ENCODE measurements at regions of chr9 and their contacts with region 1.

Region 1: DNA sequence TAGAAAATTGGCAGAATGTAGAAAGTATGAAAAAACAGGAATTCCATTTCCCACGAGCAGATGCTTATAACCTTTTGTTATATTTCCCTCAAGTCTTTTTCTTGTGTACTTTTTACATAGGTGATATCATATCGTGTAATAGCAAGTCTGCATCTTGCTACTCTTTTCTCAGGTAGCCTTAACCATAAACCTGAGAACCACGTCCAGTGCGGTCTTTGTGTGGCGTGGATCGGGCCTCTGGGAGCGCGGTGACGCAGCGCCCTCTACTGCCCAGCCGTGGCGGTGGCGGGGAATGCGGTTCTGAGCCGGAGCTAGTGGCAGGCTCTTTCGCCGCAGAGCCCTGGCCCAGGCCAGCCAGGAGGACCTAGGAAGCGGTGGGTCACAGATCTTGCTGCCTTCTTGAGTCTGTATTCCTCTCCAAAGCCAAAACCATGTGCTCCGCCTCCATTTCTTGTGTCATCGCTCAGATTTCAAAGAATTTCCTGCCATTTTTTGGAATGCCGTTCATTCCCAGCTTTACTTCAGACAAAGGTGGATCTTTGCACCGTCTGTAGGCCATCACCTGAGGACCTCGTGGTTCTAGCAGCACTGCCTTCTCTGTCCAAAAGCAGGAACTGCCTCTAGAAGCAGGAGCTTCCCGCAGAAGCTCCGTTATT is 71.9 kb downstream of the MVB12B start:
- DNase-seq: peak; percentile 65
- H3K4me3 Mint-ChIP-seq: no peak overlapping the region
- H3K27ac Mint-ChIP-seq: no peak overlapping the region
- H3K4me1 Mint-ChIP-seq: peaks cover 45% of the 10 kb centered on the region
- H3K27me3 Mint-ChIP-seq: peaks cover 36% of the 10 kb centered on the region

Region 2: DNA sequence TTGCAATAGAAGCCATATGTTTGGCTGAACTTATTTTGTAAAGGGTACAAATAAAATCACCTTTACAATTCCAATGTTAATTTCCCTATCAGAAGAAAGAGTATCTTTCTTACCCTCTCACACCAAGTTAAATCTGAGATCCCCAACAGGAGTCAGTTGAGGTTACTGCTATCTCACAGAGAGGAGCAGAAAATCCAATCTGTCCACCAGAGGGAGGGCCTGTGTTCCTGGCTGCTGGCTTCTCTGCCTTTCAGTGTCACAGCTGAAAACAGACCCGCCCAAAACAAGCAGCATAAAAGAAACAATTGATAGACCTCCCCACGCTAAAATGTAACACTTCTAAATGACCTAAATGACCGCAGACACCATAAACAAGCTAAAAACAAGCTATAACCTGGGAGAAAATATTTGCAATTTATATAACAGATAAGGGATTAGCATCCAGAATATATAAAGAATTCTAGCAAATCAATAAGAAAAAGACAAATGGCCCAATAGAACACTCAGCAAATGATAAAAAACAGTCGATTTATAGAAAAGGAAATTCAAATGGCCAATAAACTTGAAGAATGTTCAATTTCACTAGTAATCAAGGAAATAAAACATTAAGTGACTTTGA is 96.4 kb before region 1 on chr9:
- intact Hi-C with region 1: loop called (anchors 1 kb)
- DNase-seq: peak; percentile 26
- H3K4me3 Mint-ChIP-seq: no peak overlapping the region
- H3K27ac Mint-ChIP-seq: no peak overlapping the region
- H3K4me1 Mint-ChIP-seq: peaks cover 2% of the 10 kb centered on the region
- H3K27me3 Mint-ChIP-seq: peaks cover 14% of the 10 kb centered on the region

Region 3: GRCh38 chr9:126411225-126411947 is 12.9 kb after region 1 on chr9:
- intact Hi-C with region 1: loop called (anchors 1 kb)
- DNase-seq: peak; percentile 46
- H3K4me3 Mint-ChIP-seq: peak overlapping the region; percentile 35
- H3K27ac Mint-ChIP-seq: peak overlapping the region; percentile 58
- H3K4me1 Mint-ChIP-seq: peaks cover 32% of the 10 kb centered on the region
- H3K27me3 Mint-ChIP-seq: peaks cover 13% of the 10 kb centered on the region

Region 4: DNA sequence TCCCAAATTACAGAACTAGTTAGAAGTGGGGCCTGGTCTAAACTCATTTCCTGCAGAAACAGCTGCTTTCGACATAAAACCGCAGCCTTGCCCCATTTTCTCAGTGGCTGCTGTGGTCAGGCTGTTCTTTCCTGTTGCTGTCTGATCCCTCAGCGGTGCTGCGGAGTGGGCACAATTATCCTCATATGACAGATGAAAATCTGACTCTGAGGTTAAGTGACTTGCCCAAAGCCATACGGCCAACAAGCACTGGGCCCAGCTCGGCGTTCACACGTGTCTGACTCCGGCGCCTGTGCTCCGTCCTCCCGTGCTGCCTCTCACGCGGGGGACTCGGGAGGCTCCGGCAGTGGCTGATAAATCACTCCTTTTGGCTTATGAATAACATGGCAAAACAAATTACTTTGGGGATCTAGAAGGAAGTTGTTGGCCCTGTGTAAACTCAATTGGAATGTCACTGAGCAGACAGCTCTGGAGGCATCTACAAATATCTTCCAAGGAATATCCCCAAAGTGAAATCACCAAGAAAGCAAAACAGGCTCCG is 72.6 kb after region 1 on chr9:
- intact Hi-C with region 1: loop called (anchors 1 kb)
- DNase-seq: peak; percentile 81
- H3K4me3 Mint-ChIP-seq: peak overlapping the region; percentile 41
- H3K27ac Mint-ChIP-seq: peak overlapping the region; percentile 51
- H3K4me1 Mint-ChIP-seq: peaks cover 44% of the 10 kb centered on the region
- H3K27me3 Mint-ChIP-seq: peaks cover 63% of the 10 kb centered on the region